Lower leg skin (tissue), 4 donors: ENCODE measurements at regions of chr18 and their contacts with region 1.

Region 1: GRCh38 chr18:9259173-9259572 is 75.4 kb upstream of the TWSG1 start:
- DNase-seq: no peak
- H3K4me3 ChIP-seq: no peak overlapping the region
- CTCF ChIP-seq: no peak
- POLR2A ChIP-seq: no peak

Region 2: GRCh38 chr18:9304388-9305070 is 45.4 kb after region 1 on chr18:
- intact Hi-C with region 1: loop called (anchors 10 kb)
- DNase-seq: no peak
- H3K4me3 ChIP-seq: no peak overlapping the region
- CTCF ChIP-seq: no peak
- POLR2A ChIP-seq: no peak

Region 3: DNA sequence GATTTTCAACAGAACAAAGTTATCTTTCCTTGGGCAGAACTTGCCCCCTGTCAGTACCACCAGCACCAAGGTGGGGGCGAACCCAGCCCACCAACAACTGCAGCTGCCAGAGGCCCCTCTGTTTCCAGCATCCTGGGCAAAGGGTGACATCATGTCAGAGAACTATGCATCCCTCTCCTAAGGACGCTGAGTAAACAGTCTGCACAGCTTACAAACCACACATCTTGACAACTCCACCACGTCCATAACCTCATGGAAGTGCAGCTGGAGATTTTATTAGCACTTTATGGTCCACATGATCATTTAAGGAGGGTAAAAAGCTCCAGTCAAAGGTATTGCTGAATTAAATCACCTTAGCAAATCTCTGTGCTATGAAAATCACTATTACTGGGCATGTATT is 1849.8 kb after region 1 on chr18:
- intact Hi-C with region 1: loop called (anchors 5 kb)
- DNase-seq: no peak
- H3K4me3 ChIP-seq: no peak overlapping the region
- CTCF ChIP-seq: no peak
- POLR2A ChIP-seq: no peak